Calu3 (cell line): ENCODE measurements at regions of chr6 and their contacts with region 1.

Region 1: DNA sequence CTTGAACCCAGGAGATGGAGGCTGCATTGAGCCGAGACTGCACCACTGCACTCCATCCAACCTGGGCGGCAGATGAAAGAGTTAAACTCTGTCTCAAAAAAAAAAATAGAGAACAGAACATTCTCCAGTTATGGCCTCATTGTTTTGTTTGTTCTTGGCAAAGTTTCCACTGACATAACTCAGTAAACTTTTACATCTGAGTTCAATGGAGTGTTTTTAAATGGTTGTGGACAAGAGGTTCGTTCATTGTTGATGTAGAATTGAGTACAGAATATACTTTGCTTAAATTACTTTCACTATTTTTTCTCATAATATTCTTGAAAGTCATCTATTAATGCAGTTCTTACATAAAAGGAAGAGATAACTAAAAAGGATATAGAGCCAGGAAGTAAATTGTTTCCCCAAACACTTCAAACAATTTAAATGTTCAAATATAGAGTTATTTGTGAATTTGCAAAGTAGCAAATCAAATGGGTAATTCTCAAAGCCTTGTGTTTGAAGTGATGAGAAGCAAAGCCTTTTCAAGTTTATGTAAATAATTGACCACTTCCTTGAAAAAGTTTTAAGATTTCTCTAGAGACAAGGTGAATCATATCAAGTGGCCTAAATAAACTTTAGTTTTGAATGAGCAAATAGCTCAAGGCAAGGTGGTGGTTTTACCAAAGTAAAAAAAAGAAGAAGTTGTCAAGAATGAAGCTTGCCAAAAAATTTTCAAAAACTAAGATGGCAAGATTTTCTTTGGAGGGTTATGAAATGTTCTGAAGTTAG is 42.4 kb upstream of the IFNGR1 start:
- DNase-seq: no peak
- H3K4me3 Mint-ChIP-seq: no peak overlapping the region
- H3K27ac Mint-ChIP-seq: no peak overlapping the region
- H3K4me1 Mint-ChIP-seq: peaks cover 25% of the 10 kb centered on the region
- H3K27me3 Mint-ChIP-seq: no peaks in the 10 kb centered on the region
- CTCF ChIP-seq: no peak

Region 2: DNA sequence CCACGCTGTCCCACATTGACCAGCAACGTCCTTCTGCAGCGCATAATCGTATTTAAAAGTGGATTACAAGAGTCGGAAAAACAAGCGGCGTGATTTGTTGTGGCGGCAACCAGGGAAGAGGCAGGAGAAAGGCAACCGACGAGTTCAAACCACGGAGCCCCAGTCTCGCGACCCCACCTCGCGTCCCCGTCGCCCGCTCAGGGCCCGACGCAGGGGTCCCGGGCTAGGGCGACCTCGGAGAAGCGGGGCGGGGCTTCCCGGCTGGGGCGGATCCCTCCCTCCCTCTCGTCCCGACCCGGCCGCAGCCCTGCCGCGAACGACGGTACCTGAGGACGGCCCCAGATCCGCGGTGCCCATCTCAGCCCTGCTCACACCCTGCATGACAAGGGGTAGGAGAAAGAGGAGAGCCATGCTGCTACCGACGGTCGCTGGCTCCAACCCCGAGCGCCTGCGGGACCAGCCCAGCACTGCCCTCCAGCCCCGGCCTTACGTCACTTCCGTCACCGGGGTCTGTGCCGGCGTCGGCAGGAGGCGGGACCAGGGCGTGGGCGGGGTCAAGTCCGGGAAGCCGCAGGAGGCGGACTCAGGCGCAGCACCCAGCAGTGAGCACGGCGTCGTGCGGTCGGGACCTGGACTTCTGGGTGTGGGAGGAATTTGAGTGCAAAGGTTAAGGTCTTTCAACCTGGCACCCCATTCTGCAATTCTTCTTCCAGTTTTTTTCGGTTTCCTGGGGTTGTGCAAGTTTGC is 42.5 kb before region 1 on chr6 and contains the start of gene IFNGR1:
- CTCF ChIA-PET with region 1: no interaction called
- intact Hi-C with region 1: loop called (anchors 10 kb)
- DNase-seq: peak; percentile 95
- H3K4me3 Mint-ChIP-seq: peak within 1 kb of the TSS; percentile 80
- H3K27ac Mint-ChIP-seq: peak within 1 kb of the TSS; percentile 88
- H3K4me1 Mint-ChIP-seq: peaks cover 51% of the 10 kb centered on the region
- H3K27me3 Mint-ChIP-seq: no peaks in the 10 kb centered on the region
- CTCF ChIP-seq: no peak
- total RNA-seq, gene IFNGR1: 22.6 and 26.4 TPM in 2 replicates